ENCODE measurements at regions of chr2 and their contacts with region 1.

Region 1: GRCh38 chr2:121080013-121080772 is 204.8 kb downstream of the TFCP2L1 start:
- DNase-seq: peak; percentile 49
- ATAC-seq: peak; percentile 53
- H3K4me3 ChIP-seq: no peak overlapping the region
- H3K4me3 Mint-ChIP-seq: no peak overlapping the region
- H3K27ac ChIP-seq: no peak overlapping the region
- H3K27ac Mint-ChIP-seq: no peak overlapping the region
- H3K4me1 ChIP-seq: no peaks in the 10 kb centered on the region
- H3K4me1 Mint-ChIP-seq: peaks cover 2% of the 10 kb centered on the region
- H3K27me3 ChIP-seq: peaks cover 0 to 23% (median 4%) of the 10 kb centered on the region in 4 experiments
- H3K27me3 Mint-ChIP-seq: peaks cover 32% of the 10 kb centered on the region
- CTCF ChIP-seq: peak; percentile 86

Region 2: DNA sequence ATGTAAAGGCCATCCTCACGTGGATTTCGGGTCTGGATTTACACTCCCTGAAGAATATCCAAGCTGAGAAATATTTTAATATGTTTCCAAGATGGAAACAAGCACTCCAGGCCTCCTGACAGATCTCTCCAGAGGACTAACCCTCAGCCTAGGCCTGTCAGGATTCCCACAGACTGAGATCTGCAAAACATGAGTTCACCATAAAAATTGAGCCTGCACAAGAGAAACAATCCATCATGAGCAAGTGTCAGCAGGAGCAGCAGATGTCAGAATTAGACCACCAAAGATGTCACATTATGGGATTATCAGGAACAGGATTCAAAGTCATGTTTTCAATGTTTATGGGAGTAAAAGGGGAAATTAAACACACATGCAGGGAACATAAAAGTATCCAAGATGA is 13.5 kb after region 1 on chr2:
- CTCF ChIA-PET with region 1: interaction called, 15 read pairs
- POLR2A ChIA-PET with region 1: no interaction called
- intact Hi-C with region 1: no loop called
- DNase-seq: no peak
- ATAC-seq: no peak
- H3K4me3 ChIP-seq: no peak overlapping the region
- H3K4me3 Mint-ChIP-seq: no peak overlapping the region
- H3K27ac ChIP-seq: no peak overlapping the region
- H3K27ac Mint-ChIP-seq: no peak overlapping the region
- H3K4me1 ChIP-seq: no peaks in the 10 kb centered on the region
- H3K4me1 Mint-ChIP-seq: no peaks in the 10 kb centered on the region
- H3K27me3 ChIP-seq: no peaks in the 10 kb centered on the region
- H3K27me3 Mint-ChIP-seq: peaks cover 4% of the 10 kb centered on the region
- CTCF ChIP-seq: no peak